ENCODE measurements at regions of chr12 and their contacts with region 1.

Region 1: GRCh38 chr12:62709311-62709710 is 225.6 kb downstream of the PPM1H start:
- DNase-seq: no peak
- H3K4me3 ChIP-seq: no peak overlapping the region
- H3K27ac ChIP-seq: no peak overlapping the region
- H3K4me1 ChIP-seq: peaks cover 0 to 3% (median 1%) of the 10 kb centered on the region in 4 experiments
- H3K27me3 ChIP-seq: no peaks in the 10 kb centered on the region

Region 2: DNA sequence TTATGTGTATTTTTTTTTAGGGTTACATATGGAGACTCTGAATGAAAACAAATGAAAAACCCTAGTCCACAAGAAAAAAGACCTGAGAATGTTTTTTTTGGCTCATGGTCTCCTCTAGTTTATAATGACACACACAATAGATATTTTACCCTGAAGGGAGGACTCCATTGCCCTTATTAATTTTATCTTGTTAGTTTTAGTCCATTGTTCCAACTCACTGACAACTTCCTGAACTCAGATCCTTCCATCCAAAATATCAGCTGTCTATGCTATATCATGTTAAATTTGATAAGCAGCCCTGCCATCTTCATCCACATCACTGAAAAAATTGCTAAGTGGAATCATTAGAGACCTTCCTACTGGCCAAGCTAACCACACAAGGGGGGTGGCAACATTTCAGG is 10.6 kb before region 1 on chr12:
- CTCF ChIA-PET with region 1: interaction called, 22 read pairs
- POLR2A ChIA-PET with region 1: no interaction called
- DNase-seq: no peak
- H3K4me3 ChIP-seq: no peak overlapping the region
- H3K27ac ChIP-seq: no peak overlapping the region
- H3K4me1 ChIP-seq: peaks cover 7 to 38% (median 24%) of the 10 kb centered on the region in 4 experiments
- H3K27me3 ChIP-seq: no peaks in the 10 kb centered on the region

Region 3: DNA sequence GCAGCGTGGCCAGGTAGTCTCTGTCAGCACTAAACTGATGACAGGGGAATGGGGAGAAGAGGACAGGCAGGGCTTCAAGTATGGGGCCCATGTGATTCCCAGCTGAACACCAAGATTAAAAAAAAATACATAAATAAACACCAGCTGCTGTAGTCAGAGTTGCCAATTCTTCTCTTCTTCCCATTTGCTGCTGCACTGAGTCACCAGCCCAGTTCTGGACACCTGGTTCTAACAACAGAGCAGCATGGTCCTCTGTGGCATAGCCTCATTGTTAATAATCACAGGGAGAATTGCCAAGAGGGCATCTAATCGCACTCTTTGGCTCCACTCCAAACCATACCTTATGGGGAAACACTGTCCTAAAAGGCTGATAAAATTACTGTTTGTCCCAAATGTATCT is 210.5 kb after region 1 on chr12:
- CTCF ChIA-PET with region 1: no interaction called
- POLR2A ChIA-PET with region 1: no interaction called
- DNase-seq: peak in 2 of 3 donors; percentile 54 to 65
- H3K4me3 ChIP-seq: no peak overlapping the region
- H3K27ac ChIP-seq: no peak overlapping the region
- H3K4me1 ChIP-seq: peaks cover 0 to 8% (median 6%) of the 10 kb centered on the region in 4 experiments
- H3K27me3 ChIP-seq: no peaks in the 10 kb centered on the region